Endothelial cell of umbilical vein (primary cell): ENCODE measurements at regions of chr2 and their contacts with region 1.

Region 1: DNA sequence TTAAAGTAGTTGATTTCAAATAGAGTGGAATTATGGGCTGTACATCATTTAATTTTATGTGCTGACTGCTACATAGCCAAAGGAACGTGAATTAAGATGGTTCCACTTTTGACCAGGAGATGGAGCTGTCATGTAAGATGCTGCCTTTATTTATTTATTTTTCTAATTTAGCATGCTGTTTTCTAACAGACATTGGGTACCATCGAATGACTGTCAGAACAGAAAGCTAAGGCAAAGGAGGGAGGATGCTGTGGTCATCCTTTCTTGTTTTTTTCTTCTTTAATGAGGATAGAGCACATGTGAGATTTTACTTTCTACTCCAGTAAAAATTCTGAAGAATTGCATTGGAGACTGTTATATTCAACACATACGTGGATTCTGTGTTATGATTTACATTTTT is at the start of gene SCN2A:
- DNase-seq: peak; percentile 60
- H3K4me3 ChIP-seq: no peak within 1 kb of the TSS
- H3K27ac ChIP-seq: no peak within 1 kb of the TSS
- H3K4me1 ChIP-seq: no peaks in the 10 kb centered on the region
- H3K27me3 ChIP-seq: no peaks in the 10 kb centered on the region
- CTCF ChIP-seq: peak; percentile 32 to 45
- POLR2A ChIP-seq: no peak
- total RNA-seq, gene SCN2A: not detected in 2 replicates

Region 2: GRCh38 chr2:165161510-165161909 is 77.7 kb before region 1 on chr2:
- CTCF ChIA-PET with region 1: no interaction called
- POLR2A ChIA-PET with region 1: no interaction called
- dilution Hi-C with region 1: no loop called
- intact Hi-C with region 1: no loop called
- DNase-seq: no peak
- H3K4me3 ChIP-seq: no peak overlapping the region
- H3K27ac ChIP-seq: no peak overlapping the region
- H3K4me1 ChIP-seq: no peaks in the 10 kb centered on the region
- H3K27me3 ChIP-seq: no peaks in the 10 kb centered on the region
- CTCF ChIP-seq: no peak
- POLR2A ChIP-seq: no peak

Region 3: GRCh38 chr2:165268754-165269153 is 29.5 kb after region 1 on chr2:
- CTCF ChIA-PET with region 1: no interaction called
- POLR2A ChIA-PET with region 1: no interaction called
- dilution Hi-C with region 1: no loop called
- intact Hi-C with region 1: no loop called
- DNase-seq: no peak
- H3K4me3 ChIP-seq: no peak overlapping the region
- H3K27ac ChIP-seq: no peak overlapping the region
- H3K4me1 ChIP-seq: no peaks in the 10 kb centered on the region
- H3K27me3 ChIP-seq: no peaks in the 10 kb centered on the region
- CTCF ChIP-seq: no peak
- POLR2A ChIP-seq: no peak

Region 4: DNA sequence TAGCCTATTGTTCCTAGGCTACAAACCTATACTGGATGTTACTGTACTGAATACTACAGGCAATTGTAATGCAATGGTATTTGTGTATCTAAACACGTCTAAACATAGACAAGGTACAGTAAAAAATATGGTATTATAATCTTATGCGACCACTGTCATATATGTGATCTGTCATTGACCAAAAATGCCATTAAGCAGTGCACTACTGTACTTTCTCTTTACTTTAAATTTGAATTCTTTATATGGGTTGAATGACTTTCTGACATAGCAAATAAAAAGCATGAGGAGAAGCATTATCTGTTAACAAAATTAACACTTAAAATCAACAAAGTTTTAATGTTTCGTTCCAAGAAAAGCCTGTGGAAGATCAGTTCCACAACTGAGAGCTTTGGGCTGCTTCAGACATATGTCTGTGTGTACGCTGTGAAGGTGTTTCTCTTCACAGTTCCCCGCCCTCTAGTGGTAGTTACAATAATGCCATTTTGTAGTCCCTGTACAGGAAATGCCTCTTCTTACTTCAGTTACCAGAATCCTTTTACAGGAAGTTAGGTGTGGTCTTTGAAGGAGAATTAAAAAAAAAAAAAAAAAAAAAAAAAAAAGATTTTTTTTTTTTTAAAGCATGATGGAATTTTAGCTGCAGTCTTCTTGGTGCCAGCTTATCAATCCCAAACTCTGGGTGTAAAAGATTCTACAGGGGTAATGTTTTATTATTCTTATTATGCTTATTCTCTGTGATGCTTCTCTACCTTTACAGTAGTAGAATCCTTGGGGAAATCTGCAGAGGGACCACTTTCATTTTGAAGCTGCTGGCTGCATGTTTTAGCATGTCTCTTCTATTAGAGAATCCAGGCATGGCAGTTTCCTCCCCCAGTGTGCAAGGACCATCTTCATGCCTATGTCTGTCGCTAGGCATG is 54.5 kb after region 1 on chr2:
- CTCF ChIA-PET with region 1: interaction called, 11 read pairs
- POLR2A ChIA-PET with region 1: no interaction called
- dilution Hi-C with region 1: no loop called
- intact Hi-C with region 1: loop called (anchors 1 kb)
- DNase-seq: peak; percentile 73
- H3K4me3 ChIP-seq: no peak overlapping the region
- H3K27ac ChIP-seq: no peak overlapping the region
- H3K4me1 ChIP-seq: no peaks in the 10 kb centered on the region
- H3K27me3 ChIP-seq: peaks cover 3 to 9% of the 10 kb centered on the region in 2 experiments
- CTCF ChIP-seq: peak; percentile 50 to 66
- POLR2A ChIP-seq: no peak

Region 5: DNA sequence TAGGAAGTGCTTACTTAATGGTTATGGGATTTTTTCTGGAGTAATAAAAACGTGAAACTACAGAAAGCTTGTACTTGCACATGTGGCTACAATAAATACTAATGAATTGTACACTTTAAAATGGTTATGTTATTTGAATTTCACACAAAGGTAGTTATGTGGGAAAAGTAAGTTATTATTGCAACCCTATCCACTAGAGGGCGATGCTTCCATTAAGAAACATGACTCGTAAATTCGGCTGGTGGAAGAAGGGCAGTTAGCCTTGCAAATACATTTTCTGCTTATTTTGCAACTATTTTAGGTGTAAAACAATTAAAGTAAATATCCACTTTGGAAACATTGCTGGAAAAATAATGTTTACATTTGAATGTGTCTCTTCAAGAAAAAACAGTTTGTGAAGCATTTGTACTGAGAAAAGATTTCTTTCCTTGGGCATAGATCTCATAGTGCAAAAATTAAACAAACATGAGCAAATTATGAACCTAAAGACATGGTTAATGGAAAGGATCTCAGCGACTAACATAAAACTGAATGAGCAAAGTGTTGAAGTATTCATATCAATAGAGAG is 162.1 kb after region 1 on chr2:
- CTCF ChIA-PET with region 1: no interaction called
- POLR2A ChIA-PET with region 1: no interaction called
- dilution Hi-C with region 1: no loop called
- intact Hi-C with region 1: loop called (anchors 2 kb)
- DNase-seq: peak; percentile 77
- H3K4me3 ChIP-seq: no peak overlapping the region
- H3K27ac ChIP-seq: no peak overlapping the region
- H3K4me1 ChIP-seq: no peaks in the 10 kb centered on the region
- H3K27me3 ChIP-seq: peaks cover 22 to 30% of the 10 kb centered on the region in 2 experiments
- CTCF ChIP-seq: peak; percentile 43 to 46
- POLR2A ChIP-seq: no peak

Region 6: GRCh38 chr2:165417009-165417408 is 177.8 kb after region 1 on chr2:
- CTCF ChIA-PET with region 1: no interaction called
- POLR2A ChIA-PET with region 1: no interaction called
- dilution Hi-C with region 1: no loop called
- intact Hi-C with region 1: no loop called
- DNase-seq: no peak
- H3K4me3 ChIP-seq: no peak overlapping the region
- H3K27ac ChIP-seq: no peak overlapping the region
- H3K4me1 ChIP-seq: no peaks in the 10 kb centered on the region
- H3K27me3 ChIP-seq: no peaks in the 10 kb centered on the region
- CTCF ChIP-seq: no peak
- POLR2A ChIP-seq: no peak

Region 7: GRCh38 chr2:165698444-165698894 is 459.2 kb after region 1 on chr2:
- CTCF ChIA-PET with region 1: no interaction called
- POLR2A ChIA-PET with region 1: no interaction called
- dilution Hi-C with region 1: no loop called
- intact Hi-C with region 1: loop called (anchors 1 kb)
- DNase-seq: peak; percentile 56
- H3K4me3 ChIP-seq: no peak overlapping the region
- H3K27ac ChIP-seq: no peak overlapping the region
- H3K4me1 ChIP-seq: no peaks in the 10 kb centered on the region
- H3K27me3 ChIP-seq: peaks cover 2 to 6% of the 10 kb centered on the region in 2 experiments
- CTCF ChIP-seq: peak; percentile 30 to 52
- POLR2A ChIP-seq: no peak

Region 8: DNA sequence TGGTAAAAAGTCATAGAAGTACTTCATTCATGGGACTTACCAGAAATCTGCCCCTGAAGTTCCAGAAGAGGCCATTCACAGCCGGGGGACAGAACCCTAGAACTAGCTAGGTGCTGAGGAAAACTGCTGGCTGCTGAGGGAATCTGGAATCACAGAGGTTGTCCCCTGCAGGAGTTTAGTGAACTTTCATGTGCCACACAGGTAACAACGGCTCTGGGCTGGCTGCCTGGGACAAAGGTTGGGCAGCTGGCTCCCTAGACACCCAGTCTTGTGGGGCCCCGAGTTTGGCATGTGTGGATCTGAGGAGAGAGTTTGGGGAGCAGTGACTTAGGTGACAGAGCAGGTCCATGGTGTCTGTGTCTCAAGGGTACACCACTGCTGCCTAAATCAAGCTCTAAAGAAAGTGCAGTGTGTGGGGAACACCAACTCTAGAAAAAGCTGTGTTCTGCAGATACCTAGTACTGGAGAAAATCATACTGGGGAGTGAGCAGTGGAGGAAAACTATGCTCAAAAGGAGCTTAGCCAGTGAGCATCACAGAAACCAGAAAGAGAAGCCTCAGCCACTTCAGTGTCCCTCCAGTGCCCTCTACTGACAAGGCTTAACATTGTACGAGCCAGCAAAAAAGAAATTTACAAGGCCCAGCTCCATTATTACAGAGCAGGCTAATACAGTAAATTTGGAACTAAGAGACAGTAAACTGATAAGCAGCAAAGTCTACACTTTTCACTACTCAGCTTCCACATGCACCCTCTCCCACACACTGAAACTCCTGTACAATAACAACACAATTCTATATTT is 539.6 kb after region 1 on chr2:
- CTCF ChIA-PET with region 1: interaction called, 16 read pairs
- POLR2A ChIA-PET with region 1: no interaction called
- dilution Hi-C with region 1: no loop called
- intact Hi-C with region 1: loop called (anchors 2 kb)
- DNase-seq: peak; percentile 7
- H3K4me3 ChIP-seq: no peak overlapping the region
- H3K27ac ChIP-seq: no peak overlapping the region
- H3K4me1 ChIP-seq: no peaks in the 10 kb centered on the region
- H3K27me3 ChIP-seq: no peaks in the 10 kb centered on the region
- CTCF ChIP-seq: peak; percentile 20 to 23
- POLR2A ChIP-seq: no peak